ENCODE measurements at regions of chr6 and their contacts with region 1.

Region 1: DNA sequence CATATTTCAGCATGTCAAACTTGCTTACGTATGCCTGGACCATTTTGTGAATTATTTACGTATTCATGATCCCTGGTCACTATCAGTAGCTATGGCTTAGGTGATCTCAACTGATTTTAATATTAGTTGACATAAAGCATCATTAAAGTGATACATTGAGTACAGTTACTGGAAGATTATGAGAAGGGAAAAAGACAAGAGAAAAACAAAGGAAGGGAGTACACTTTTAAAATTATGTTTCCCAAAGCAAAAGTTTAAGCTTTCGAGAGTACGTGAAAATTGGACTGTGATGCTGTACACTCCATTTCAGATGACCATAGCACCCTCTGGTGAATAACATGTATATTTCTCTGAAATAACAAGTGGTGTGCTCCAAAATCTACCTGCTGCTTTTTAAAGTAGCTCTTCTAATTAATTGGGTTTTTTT is 215.0 kb upstream of the HSF2 start:
- DNase-seq: no peak
- H3K4me3 Mint-ChIP-seq: no peak overlapping the region
- H3K27ac Mint-ChIP-seq: no peak overlapping the region
- H3K4me1 Mint-ChIP-seq: no peaks in the 10 kb centered on the region
- H3K27me3 Mint-ChIP-seq: peaks cover 5% of the 10 kb centered on the region

Region 2: DNA sequence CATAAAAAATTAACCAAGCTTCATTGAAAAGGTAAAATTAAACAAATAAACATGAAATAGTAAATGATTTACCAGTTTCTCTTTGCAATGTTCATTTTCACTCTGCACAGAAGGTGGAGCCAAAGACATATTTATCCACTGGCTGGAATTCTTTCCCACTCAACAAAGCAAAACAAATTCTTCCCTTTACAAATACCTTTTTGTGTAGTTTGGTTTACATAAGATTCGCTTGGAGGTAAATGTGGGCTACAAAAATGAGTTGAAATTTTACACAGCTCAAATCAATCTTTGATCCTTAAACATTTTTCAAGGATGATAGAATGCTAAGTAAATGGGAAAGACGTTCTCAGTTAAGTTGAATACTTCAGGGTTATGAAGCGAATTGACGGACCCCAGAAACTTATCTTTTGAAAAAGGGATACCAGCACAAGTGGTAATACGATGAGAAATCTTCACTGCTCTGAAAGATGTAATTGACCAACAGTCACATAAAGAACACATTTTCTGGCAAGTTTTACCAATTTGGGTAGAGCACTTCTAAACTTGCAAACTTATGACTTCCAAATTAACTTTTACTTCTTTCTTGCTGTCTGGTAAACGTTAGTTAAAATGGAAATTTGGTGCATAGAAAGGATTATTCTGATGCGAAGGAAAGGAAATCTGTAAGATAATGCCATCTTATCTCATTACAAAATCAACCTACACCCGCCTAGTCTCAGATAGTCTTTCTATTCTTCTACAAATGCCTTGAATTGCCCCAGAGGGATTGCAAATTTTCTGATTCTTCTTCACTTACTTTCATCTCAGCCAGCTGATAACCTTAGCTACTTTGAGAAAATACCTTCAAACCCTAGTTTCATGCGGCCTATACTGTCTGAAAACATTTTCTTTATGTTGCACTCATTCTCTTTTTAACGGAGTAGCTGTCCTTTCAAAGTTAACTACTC is 753.6 kb before region 1 on chr6:
- CTCF ChIA-PET with region 1: no interaction called
- intact Hi-C with region 1: loop called (anchors 1 kb)
- DNase-seq: no peak
- H3K4me3 Mint-ChIP-seq: no peak overlapping the region
- H3K27ac Mint-ChIP-seq: no peak overlapping the region
- H3K4me1 Mint-ChIP-seq: peaks cover 3% of the 10 kb centered on the region
- H3K27me3 Mint-ChIP-seq: no peaks in the 10 kb centered on the region

Region 3: GRCh38 chr6:122165014-122165413 is 19.4 kb before region 1 on chr6:
- CTCF ChIA-PET with region 1: no interaction called
- intact Hi-C with region 1: no loop called
- DNase-seq: no peak
- H3K4me3 Mint-ChIP-seq: no peak overlapping the region
- H3K27ac Mint-ChIP-seq: no peak overlapping the region
- H3K4me1 Mint-ChIP-seq: no peaks in the 10 kb centered on the region
- H3K27me3 Mint-ChIP-seq: no peaks in the 10 kb centered on the region